ENCODE measurements at regions of chr5 and their contacts with region 1.

Region 1: DNA sequence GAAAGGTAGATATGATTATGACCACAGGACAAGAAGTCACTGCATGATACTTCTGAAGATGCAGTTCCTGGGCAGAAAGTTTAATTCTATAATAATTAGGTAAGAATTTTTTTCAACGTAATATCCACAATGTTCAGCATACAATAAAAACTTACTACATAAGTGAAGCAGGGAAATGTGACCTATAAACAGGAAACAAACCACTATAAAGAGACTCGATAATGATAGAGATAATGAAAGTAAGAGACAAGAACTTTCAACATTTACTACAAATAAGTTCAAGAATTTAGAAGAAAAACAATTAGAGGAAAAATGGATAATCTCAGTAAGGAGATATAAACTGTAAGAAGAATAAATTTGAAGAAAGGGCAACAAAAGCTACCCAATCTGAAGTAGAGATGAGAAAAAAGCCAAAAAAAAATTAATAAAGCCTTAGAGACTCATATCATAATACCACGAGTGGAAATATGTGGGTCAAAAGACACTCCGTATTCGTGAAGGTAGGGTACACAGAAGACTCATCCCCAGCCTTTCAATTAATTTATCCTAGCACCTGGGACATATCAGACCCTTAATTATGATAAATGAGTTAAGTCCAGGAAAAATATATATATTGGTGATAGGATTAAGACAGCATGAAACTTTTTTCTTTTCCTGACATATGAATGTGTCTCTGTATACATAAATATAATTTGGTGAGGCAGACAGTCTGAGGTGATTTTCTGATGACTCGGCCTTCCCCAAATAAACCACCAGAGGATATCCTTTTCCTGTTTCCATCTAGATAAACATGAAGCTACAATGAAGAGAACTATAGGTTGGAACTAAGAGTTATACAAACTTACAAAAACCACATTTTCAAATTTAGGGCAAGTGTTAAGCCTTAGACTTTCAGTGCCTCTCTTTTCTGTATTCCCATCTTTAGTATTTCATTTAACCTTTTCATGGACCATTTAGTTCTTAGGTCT is 120.4 kb downstream of the RAPGEF6 start:
- DNase-seq: peak; percentile 67 to 79 (median 72)
- H3K4me3 ChIP-seq: peak overlapping the region; percentile 7 to 37
- H3K4me3 Mint-ChIP-seq: peak overlapping the region; percentile 79 to 92 (median 88)
- H3K27ac ChIP-seq: peak overlapping the region; percentile 61
- H3K27ac Mint-ChIP-seq: peak overlapping the region; percentile 81 to 98 (median 93)
- H3K4me1 ChIP-seq: peaks cover 60% of the 10 kb centered on the region
- H3K4me1 Mint-ChIP-seq: peaks cover 43 to 72% (median 53%) of the 10 kb centered on the region in 4 donors
- H3K27me3 ChIP-seq: no peaks in the 10 kb centered on the region
- H3K27me3 Mint-ChIP-seq: no peaks in the 10 kb centered on the region

Region 2: DNA sequence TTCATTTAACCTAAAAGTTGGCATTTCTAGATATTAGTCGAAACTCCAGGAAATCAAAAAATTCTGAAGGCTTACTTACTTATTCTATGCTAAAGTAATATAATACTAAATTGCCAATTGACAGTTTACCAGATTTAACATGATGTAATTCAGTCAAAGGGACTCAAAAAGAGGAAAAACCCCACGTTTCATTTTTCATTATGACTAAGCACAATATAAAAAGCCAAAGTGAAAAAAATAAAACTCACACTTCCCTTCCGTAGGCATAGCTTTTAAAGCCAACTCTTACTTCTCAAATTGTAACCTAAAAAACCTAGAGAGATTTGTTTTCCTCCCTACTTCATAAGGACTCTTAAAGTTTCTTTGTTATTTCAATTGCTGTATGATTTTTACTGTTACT is 26.1 kb before region 1 on chr5:
- CTCF ChIA-PET with region 1: no interaction called
- POLR2A ChIA-PET with region 1: no interaction called
- intact Hi-C with region 1: no loop called
- DNase-seq: no peak
- H3K4me3 ChIP-seq: no peak overlapping the region
- H3K4me3 Mint-ChIP-seq: peak overlapping the region in 1 of 8 donors; percentile 18
- H3K27ac ChIP-seq: peak overlapping the region; percentile 9
- H3K27ac Mint-ChIP-seq: peak overlapping the region in 6 of 7 donors; percentile 4 to 63 (median 40)
- H3K4me1 ChIP-seq: peaks cover 13% of the 10 kb centered on the region
- H3K4me1 Mint-ChIP-seq: peaks cover 19 to 35% (median 25%) of the 10 kb centered on the region in 4 donors
- H3K27me3 ChIP-seq: no peaks in the 10 kb centered on the region
- H3K27me3 Mint-ChIP-seq: no peaks in the 10 kb centered on the region

Region 3: DNA sequence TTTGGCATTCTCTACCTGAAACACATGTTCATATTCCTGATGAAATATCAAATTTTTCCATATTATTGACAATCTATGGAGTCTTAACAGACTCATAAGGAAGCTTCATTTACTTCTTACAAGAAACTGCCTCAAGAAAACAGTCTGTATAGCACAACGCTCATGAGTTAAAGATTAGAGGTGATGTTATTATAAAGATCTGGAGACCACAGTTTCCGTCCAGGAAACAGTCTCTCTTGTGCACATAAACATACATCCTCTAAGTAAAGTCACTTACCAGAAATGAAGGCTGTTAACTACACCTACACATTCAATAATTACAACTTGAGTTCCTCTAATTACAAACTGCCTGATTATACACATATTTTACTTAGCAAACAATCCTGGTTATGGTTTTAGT is 33.6 kb after region 1 on chr5:
- CTCF ChIA-PET with region 1: interaction called, 3 read pairs
- POLR2A ChIA-PET with region 1: interaction called, 10 read pairs
- intact Hi-C with region 1: loop called (anchors 1 kb)
- DNase-seq: peak; percentile 54 to 71 (median 60)
- H3K4me3 ChIP-seq: peak overlapping the region; percentile 70 to 79
- H3K4me3 Mint-ChIP-seq: peak overlapping the region; percentile 84 to 99 (median 96)
- H3K27ac ChIP-seq: peak overlapping the region; percentile 61
- H3K27ac Mint-ChIP-seq: peak overlapping the region; percentile 89 to 97 (median 96)
- H3K4me1 ChIP-seq: peaks cover 64% of the 10 kb centered on the region
- H3K4me1 Mint-ChIP-seq: peaks cover 46 to 77% (median 57%) of the 10 kb centered on the region in 4 donors
- H3K27me3 ChIP-seq: no peaks in the 10 kb centered on the region
- H3K27me3 Mint-ChIP-seq: no peaks in the 10 kb centered on the region

Region 4: GRCh38 chr5:131634996-131635754 is 120.6 kb after region 1 on chr5 and contains the start of gene RAPGEF6:
- CTCF ChIA-PET with region 1: interaction called, 3 read pairs
- POLR2A ChIA-PET with region 1: no interaction called
- intact Hi-C with region 1: loop called (anchors 1 kb)
- DNase-seq: peak; percentile 95 to 99 (median 99)
- H3K4me3 ChIP-seq: peak within 1 kb of the TSS; percentile 79 to 98
- H3K4me3 Mint-ChIP-seq: peak within 1 kb of the TSS; percentile 92 to 99 (median 95)
- H3K27ac ChIP-seq: peak within 1 kb of the TSS; percentile 97
- H3K27ac Mint-ChIP-seq: peak within 1 kb of the TSS; percentile 97 to 100 (median 99)
- H3K4me1 ChIP-seq: peaks cover 57% of the 10 kb centered on the region
- H3K4me1 Mint-ChIP-seq: peaks cover 18 to 40% (median 25%) of the 10 kb centered on the region in 4 donors
- H3K27me3 ChIP-seq: no peaks in the 10 kb centered on the region
- H3K27me3 Mint-ChIP-seq: no peaks in the 10 kb centered on the region
- total RNA-seq, gene RAPGEF6: 114 to 121 TPM